AG04450 (cell line): ENCODE measurements at regions of chr14 and their contacts with region 1.

Region 1: GRCh38 chr14:60637479-60638315 is 11.6 kb downstream of the SIX1 start:
- DNase-seq: no peak
- H3K4me3 ChIP-seq: peak overlapping the region; percentile 14
- H3K27ac ChIP-seq: peak overlapping the region; percentile 59
- H3K27me3 ChIP-seq: no peaks in the 10 kb centered on the region
- CTCF ChIP-seq: no peak

Region 2: GRCh38 chr14:60724137-60724619 is 86.5 kb after region 1 on chr14 and contains the start of gene SIX4:
- CTCF ChIA-PET with region 1: no interaction called
- POLR2A ChIA-PET with region 1: no interaction called
- DNase-seq: peak; percentile 79
- H3K4me3 ChIP-seq: peak within 1 kb of the TSS; percentile 92
- H3K27ac ChIP-seq: peak within 1 kb of the TSS; percentile 92
- H3K27me3 ChIP-seq: no peaks in the 10 kb centered on the region
- CTCF ChIP-seq: no peak
- polyA plus RNA-seq, gene SIX4: 17.7 and 21.8 TPM in 2 replicates

Region 3: GRCh38 chr14:60964904-60965303 is 327.2 kb after region 1 on chr14:
- CTCF ChIA-PET with region 1: interaction called, 10 read pairs
- POLR2A ChIA-PET with region 1: no interaction called
- DNase-seq: no peak
- H3K4me3 ChIP-seq: no peak overlapping the region
- H3K27ac ChIP-seq: no peak overlapping the region
- H3K27me3 ChIP-seq: no peaks in the 10 kb centered on the region
- CTCF ChIP-seq: no peak